ENCODE measurements at regions of chr7 and their contacts with region 1.

Region 1: DNA sequence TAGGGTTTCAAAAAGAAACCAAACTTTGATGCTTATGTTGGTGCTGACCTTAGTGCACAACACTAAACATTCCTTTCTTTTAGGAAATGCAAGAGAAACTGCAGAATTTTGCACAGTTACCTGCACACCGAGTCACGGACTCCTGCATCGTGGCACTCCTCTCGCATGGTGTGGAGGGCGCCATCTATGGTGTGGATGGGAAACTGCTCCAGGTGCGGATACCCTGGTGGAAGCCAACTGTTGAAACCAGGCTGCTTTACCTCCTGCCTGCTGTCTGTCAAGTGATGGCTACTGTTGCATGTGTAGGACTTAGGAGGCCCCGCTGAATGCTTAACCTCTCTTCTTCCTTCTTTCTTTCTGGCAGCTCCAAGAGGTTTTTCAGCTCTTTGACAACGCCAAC is 11.7 kb downstream of the CASP2 start:
- DNase-seq: peak in 1 of 2 experiments; percentile 77
- H3K4me3 ChIP-seq: no peak overlapping the region
- H3K27ac ChIP-seq: no peak overlapping the region
- H3K4me1 ChIP-seq: no peaks in the 10 kb centered on the region
- H3K27me3 ChIP-seq: no peaks in the 10 kb centered on the region
- CTCF ChIP-seq: peak; percentile 74 to 96 (median 91)
- EP300 ChIP-seq: no peak
- POLR2A ChIP-seq: no peak
- RAD21 ChIP-seq: peak; percentile 47 to 60

Region 2: GRCh38 chr7:143073556-143073955 is 226.3 kb before region 1 on chr7:
- CTCF ChIA-PET with region 1: no interaction called
- POLR2A ChIA-PET with region 1: no interaction called
- DNase-seq: no peak
- H3K4me3 ChIP-seq: no peak overlapping the region
- H3K27ac ChIP-seq: no peak overlapping the region
- H3K4me1 ChIP-seq: peaks cover 0 to 6% (median 2%) of the 10 kb centered on the region in 4 experiments; a peak in 2 of 7 replicates
- H3K27me3 ChIP-seq: peaks cover 0 to 1% (median 0%) of the 10 kb centered on the region in 4 experiments; a peak in 1 of 7 replicates
- CTCF ChIP-seq: no peak
- EP300 ChIP-seq: no peak
- POLR2A ChIP-seq: no peak
- RAD21 ChIP-seq: no peak

Region 3: GRCh38 chr7:143256932-143257331 is 42.9 kb before region 1 on chr7:
- CTCF ChIA-PET with region 1: interaction called, 11 read pairs
- POLR2A ChIA-PET with region 1: no interaction called
- DNase-seq: no peak
- H3K4me3 ChIP-seq: no peak overlapping the region
- H3K27ac ChIP-seq: no peak overlapping the region
- H3K4me1 ChIP-seq: no peaks in the 10 kb centered on the region
- H3K27me3 ChIP-seq: no peaks in the 10 kb centered on the region
- CTCF ChIP-seq: no peak
- EP300 ChIP-seq: no peak
- POLR2A ChIP-seq: no peak
- RAD21 ChIP-seq: no peak

Region 4: DNA sequence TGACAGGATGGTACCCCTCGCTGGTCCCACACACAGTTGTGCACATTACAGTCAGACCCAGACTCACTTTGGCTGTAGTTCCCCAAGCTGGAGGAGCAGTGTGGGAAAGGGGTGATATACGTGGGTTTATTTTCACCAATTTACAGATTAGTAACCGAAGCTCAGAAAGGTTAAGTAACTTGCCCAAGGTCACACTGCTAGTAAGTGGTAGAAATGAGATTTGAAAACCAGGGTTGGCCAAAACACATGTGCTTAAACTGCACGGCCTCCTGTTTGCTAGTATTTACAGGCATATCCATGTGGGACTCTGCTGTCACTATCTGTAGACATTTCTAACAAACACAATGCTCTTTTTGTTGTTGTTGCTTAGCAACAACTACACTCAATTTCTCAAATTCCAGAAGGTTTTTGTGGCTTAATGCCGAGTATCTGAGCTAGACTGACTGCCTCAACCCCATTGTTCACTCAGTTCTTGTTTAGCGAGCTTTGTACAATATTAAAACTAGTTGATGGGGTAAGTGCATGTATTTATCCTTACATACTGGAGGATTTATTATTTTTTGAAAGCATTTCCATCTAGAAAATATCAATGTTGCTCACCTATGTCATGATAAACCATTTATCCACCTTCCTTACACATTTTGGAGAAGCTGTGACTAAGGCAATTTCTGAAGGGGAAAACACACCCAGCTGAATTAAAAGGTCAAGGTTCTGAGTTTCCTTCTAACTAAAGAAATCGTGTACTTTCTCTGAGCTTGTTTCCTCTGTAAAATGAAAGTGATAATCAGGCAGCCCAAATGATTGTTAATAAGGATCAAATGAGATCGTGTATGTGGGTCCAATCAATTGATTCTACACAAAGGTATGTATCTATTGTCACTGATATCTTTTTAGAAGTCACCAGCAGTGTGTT is 20.4 kb before region 1 on chr7:
- CTCF ChIA-PET with region 1: interaction called, 21 read pairs
- POLR2A ChIA-PET with region 1: no interaction called
- DNase-seq: no peak
- H3K4me3 ChIP-seq: no peak overlapping the region
- H3K27ac ChIP-seq: no peak overlapping the region
- H3K4me1 ChIP-seq: peaks cover 2 to 9% (median 4%) of the 10 kb centered on the region in 4 experiments; a peak in 5 of 7 replicates
- H3K27me3 ChIP-seq: no peaks in the 10 kb centered on the region
- CTCF ChIP-seq: no peak
- EP300 ChIP-seq: no peak
- POLR2A ChIP-seq: no peak
- RAD21 ChIP-seq: no peak

Region 5: GRCh38 chr7:143391462-143392404 is 91.9 kb after region 1 on chr7:
- CTCF ChIA-PET with region 1: interaction called, 18 read pairs
- POLR2A ChIA-PET with region 1: interaction called, 3 read pairs
- DNase-seq: no peak
- H3K4me3 ChIP-seq: no peak overlapping the region
- H3K27ac ChIP-seq: no peak overlapping the region
- H3K4me1 ChIP-seq: no peaks in the 10 kb centered on the region; a peak in 1 of 7 replicates
- H3K27me3 ChIP-seq: no peaks in the 10 kb centered on the region
- CTCF ChIP-seq: no peak
- EP300 ChIP-seq: no peak
- POLR2A ChIP-seq: no peak
- RAD21 ChIP-seq: no peak

Region 6: GRCh38 chr7:143416565-143417149 is 116.8 kb after region 1 on chr7:
- CTCF ChIA-PET with region 1: interaction called, 14 read pairs
- POLR2A ChIA-PET with region 1: no interaction called
- DNase-seq: no peak
- H3K4me3 ChIP-seq: no peak overlapping the region
- H3K27ac ChIP-seq: no peak overlapping the region
- H3K4me1 ChIP-seq: peaks cover 3 to 8% (median 6%) of the 10 kb centered on the region in 4 experiments; a peak in 6 of 7 replicates
- H3K27me3 ChIP-seq: no peaks in the 10 kb centered on the region
- CTCF ChIP-seq: peak in 2 of 3 experiments; percentile 45 to 48; a peak in 3 of 4 replicates
- EP300 ChIP-seq: no peak
- POLR2A ChIP-seq: no peak
- RAD21 ChIP-seq: peak; percentile 50 to 56

Region 7: GRCh38 chr7:143479055-143479766 is 179.4 kb after region 1 on chr7:
- CTCF ChIA-PET with region 1: no interaction called
- POLR2A ChIA-PET with region 1: no interaction called
- DNase-seq: no peak
- H3K4me3 ChIP-seq: no peak overlapping the region
- H3K27ac ChIP-seq: no peak overlapping the region
- H3K4me1 ChIP-seq: no peaks in the 10 kb centered on the region
- H3K27me3 ChIP-seq: no peaks in the 10 kb centered on the region
- CTCF ChIP-seq: no peak
- EP300 ChIP-seq: no peak
- POLR2A ChIP-seq: no peak
- RAD21 ChIP-seq: no peak

Measured in H1 (cell line).